CD14-positive monocyte (primary cell): ENCODE measurements at regions of chr18 and their contacts with region 1.

Region 1: DNA sequence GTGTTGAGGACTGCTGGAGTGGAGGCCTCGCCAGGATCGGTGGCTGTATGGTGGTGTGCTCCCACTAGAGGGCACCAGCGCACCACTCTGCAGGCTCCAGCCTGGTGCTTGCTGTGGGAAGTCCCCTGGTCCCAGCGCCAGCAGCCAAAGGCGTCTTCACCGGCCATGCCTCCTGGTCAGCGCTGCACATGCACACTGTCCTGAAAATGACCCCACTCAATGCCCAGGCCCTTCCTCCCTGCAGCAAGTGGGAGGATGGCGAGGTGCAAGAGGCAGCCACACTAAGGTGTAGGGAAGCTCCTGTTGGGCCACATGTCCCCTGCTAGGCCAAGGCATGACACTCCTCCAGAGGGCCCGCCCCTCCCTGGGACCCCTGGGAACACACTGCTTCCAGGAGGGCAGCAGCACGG is 136.5 kb downstream of the CTIF start:
- DNase-seq: peak; percentile 85 to 89 (median 89)
- H3K4me3 ChIP-seq: no peak overlapping the region
- H3K4me3 Mint-ChIP-seq: peak overlapping the region in 1 of 2 donors; percentile 35
- H3K27ac ChIP-seq: peak overlapping the region in 1 of 2 donors; percentile 33
- H3K27ac Mint-ChIP-seq: no peak overlapping the region
- H3K4me1 ChIP-seq: peaks cover 61 to 74% of the 10 kb centered on the region in 2 donors
- H3K4me1 Mint-ChIP-seq: peaks cover 76% of the 10 kb centered on the region
- H3K27me3 ChIP-seq: no peaks in the 10 kb centered on the region
- H3K27me3 Mint-ChIP-seq: peaks cover 0 to 4% (median 1%) of the 10 kb centered on the region in 3 donors
- CTCF ChIP-seq: peak; percentile 91

Region 2: DNA sequence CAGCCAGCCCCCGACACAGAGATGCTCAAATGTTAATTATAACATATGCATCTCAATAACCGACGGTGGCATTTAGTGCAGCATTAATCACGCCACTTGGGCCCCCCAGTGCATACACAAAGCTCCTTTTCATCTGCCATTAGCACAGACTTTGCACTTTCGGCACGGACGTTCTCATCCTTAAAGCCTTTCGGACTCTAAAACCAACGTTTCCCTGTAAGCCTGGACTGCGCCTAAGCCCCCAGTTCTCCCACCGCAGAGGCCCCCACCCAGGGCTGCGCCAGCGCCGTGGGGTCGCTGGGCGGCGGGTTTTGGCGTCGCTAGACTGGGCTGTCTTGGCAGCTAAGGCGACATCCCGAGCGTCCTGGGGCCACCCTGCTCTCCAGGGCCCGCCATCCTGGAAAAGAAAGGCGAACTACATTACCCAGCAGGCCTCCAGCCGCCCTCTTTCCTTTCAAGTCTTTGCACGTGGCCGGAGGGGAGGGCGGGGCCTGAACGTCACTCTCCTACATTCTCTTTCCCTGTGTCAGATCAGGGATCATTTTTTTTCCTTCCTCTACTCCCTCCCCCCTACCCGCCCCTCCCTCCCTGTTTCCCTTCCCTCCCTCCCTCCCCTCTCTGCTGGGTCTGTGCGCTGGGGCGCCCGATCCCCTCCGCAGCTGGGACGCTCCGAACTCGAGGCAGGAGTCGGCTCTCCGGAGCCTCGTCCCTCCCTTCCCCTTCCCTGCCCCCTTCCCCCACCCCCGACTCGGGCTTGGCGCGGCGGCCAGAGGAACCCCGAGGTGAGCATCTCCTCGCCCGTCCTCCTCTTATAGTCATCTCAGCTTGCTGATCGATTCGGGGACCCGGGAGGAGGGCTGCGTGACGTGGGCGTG is 136.6 kb before region 1 on chr18 and contains the start of gene CTIF:
- intact Hi-C with region 1: no loop called
- DNase-seq: peak; percentile 67 to 77 (median 72)
- H3K4me3 ChIP-seq: peak within 1 kb of the TSS; percentile 48 to 94 (median 84)
- H3K4me3 Mint-ChIP-seq: peak within 1 kb of the TSS; percentile 92 to 94
- H3K27ac ChIP-seq: peak within 1 kb of the TSS in 1 of 2 donors; percentile 20
- H3K27ac Mint-ChIP-seq: peak within 1 kb of the TSS in 6 of 7 donors; percentile 68 to 85 (median 82)
- H3K4me1 ChIP-seq: peaks cover 21 to 33% of the 10 kb centered on the region in 2 donors
- H3K4me1 Mint-ChIP-seq: peaks cover 13% of the 10 kb centered on the region
- H3K27me3 ChIP-seq: peaks cover 0 to 4% of the 10 kb centered on the region in 2 donors
- H3K27me3 Mint-ChIP-seq: peaks cover 5 to 16% (median 6%) of the 10 kb centered on the region in 3 donors
- CTCF ChIP-seq: no peak
- polyA plus RNA-seq, gene CTIF: 0.38 to 8.7 (median 1.2) TPM

Region 3: DNA sequence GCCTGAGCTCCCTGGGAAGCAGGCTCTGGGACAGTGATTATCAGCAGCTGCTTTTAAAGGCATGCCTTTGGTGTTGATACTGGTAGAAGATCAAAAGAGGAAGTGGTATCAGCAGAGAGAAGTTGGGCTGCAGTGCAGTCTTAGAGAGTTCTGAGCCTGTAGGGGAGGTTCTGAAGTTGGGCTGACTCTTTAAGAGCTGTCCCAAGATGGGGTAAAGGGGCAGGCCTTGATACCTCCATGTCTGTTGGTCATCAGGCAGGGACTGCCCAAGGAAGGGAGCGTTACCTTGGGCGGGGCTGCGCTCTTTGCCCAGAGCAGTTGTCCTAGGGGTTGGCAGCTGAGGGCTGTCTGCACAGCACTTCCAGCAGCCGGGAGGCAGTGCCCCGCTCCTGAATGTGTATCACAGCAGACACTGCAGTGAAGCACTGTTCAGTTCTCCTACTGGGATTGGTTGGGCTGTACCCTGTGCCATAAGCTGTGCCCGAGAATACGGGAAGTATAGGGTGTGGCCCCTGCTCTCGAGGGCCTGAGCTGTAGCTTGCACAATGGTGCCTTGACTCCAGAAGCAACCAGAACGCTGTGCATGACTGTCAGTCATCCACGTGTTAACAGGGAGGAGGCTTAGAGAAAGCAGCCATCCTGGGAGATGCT is 40.5 kb after region 1 on chr18:
- intact Hi-C with region 1: loop called in 1 of 2 experiments (anchors 1 kb)
- DNase-seq: peak; percentile 94 to 96 (median 94)
- H3K4me3 ChIP-seq: peak overlapping the region in 1 of 3 experiments; percentile 45
- H3K4me3 Mint-ChIP-seq: peak overlapping the region; percentile 50 to 75
- H3K27ac ChIP-seq: peak overlapping the region; percentile 96 to 98
- H3K27ac Mint-ChIP-seq: peak overlapping the region; percentile 98 to 99 (median 99)
- H3K4me1 ChIP-seq: peaks cover 35 to 36% of the 10 kb centered on the region in 2 donors
- H3K4me1 Mint-ChIP-seq: peaks cover 46% of the 10 kb centered on the region
- H3K27me3 ChIP-seq: no peaks in the 10 kb centered on the region
- H3K27me3 Mint-ChIP-seq: peaks cover 0 to 2% (median 0%) of the 10 kb centered on the region in 3 donors
- CTCF ChIP-seq: no peak

Region 4: GRCh38 chr18:48742706-48743475 is 67.5 kb after region 1 on chr18:
- intact Hi-C with region 1: loop called in 1 of 2 experiments (anchors 10 kb)
- DNase-seq: peak; percentile 81 to 85 (median 82)
- H3K4me3 ChIP-seq: peak overlapping the region in 1 of 3 experiments; percentile 48
- H3K4me3 Mint-ChIP-seq: peak overlapping the region; percentile 7 to 78
- H3K27ac ChIP-seq: peak overlapping the region; percentile 72 to 80
- H3K27ac Mint-ChIP-seq: peak overlapping the region; percentile 67 to 95 (median 90)
- H3K4me1 ChIP-seq: peaks cover 42 to 45% of the 10 kb centered on the region in 2 donors
- H3K4me1 Mint-ChIP-seq: peaks cover 47% of the 10 kb centered on the region
- H3K27me3 ChIP-seq: no peaks in the 10 kb centered on the region
- H3K27me3 Mint-ChIP-seq: peaks cover 0 to 3% (median 0%) of the 10 kb centered on the region in 3 donors
- CTCF ChIP-seq: no peak

Region 5: DNA sequence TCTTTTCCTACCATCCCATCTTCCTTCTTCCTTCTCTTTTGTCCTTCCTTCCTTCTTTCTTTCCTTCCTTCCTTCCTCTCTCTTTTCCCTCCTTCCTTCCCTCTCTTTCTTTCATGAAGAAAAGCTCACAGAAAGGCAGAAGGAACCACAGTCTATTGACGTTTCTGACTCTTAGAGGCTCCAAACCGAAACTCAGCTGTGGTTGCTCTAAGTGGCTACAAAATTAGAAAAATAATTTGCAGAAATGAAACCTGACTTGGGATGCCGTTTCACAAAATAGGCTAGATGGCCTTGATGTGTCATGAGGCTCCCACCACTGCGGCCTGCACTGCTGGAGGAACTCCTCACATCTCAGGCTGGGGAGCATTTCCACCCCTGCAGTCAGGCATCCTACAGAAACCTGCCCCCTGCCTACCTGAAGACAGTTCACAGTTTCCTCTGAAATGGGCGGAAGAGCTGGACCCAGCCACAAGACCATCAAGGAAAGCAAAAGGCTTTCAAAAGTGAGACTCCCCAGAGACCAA is 109.8 kb after region 1 on chr18:
- intact Hi-C with region 1: loop called in 1 of 2 experiments (anchors 5 kb)
- DNase-seq: peak; percentile 82 to 91 (median 88)
- H3K4me3 ChIP-seq: peak overlapping the region in 1 of 3 experiments; percentile 39
- H3K4me3 Mint-ChIP-seq: peak overlapping the region; percentile 25 to 78
- H3K27ac ChIP-seq: peak overlapping the region; percentile 81 to 93
- H3K27ac Mint-ChIP-seq: peak overlapping the region; percentile 90 to 97 (median 96)
- H3K4me1 ChIP-seq: peaks cover 75 to 84% of the 10 kb centered on the region in 2 donors
- H3K4me1 Mint-ChIP-seq: peaks cover 79% of the 10 kb centered on the region
- H3K27me3 ChIP-seq: no peaks in the 10 kb centered on the region
- H3K27me3 Mint-ChIP-seq: peaks cover 3 to 16% (median 13%) of the 10 kb centered on the region in 3 donors
- CTCF ChIP-seq: no peak

Region 6: DNA sequence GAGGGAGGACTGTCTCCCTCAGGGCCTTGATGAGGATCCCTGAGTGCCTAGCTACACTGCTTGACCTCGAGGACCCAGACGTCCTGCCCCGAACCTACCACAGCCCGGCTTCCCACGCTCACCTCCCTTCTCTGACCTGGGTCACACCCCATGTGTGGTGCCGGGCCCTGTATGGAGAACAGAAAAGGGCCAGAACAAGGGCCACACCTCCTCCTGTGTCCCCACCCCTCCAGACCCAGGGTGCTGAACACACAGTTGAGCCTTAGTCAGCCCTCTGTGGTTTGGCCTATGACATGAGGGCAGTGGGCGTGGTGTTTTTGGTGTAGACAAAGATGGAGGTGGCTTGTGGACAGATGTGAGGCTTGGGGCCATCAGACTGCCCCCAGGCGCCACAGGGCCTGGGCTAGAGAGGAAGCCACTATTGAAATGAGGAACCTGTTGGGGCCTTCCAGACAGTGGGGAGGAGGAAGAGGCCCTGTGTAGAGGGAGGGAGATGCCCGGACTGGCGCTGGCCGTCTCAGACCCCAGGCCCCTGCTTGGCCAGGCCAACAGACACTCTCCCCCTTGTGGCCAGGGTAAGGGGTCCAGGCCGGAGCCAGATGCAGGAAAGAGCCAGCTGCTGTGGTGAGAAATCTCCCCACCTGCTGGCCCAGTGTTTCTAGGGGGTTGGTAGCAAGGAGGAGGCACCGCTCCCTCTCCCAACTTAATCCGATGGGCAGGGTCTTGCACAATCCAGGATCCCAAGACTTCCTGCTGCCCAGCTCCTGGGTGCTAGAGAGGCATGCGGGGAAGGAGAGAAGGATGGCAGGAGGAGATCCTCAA is 221.5 kb after region 1 on chr18:
- intact Hi-C with region 1: loop called in 1 of 2 experiments (anchors 10 kb)
- DNase-seq: peak; percentile 99 to 100 (median 100)
- H3K4me3 ChIP-seq: peak overlapping the region in 1 of 3 experiments; percentile 50
- H3K4me3 Mint-ChIP-seq: peak overlapping the region; percentile 56 to 74
- H3K27ac ChIP-seq: peak overlapping the region; percentile 90 to 93
- H3K27ac Mint-ChIP-seq: peak overlapping the region; percentile 93 to 99 (median 97)
- H3K4me1 ChIP-seq: peaks cover 43 to 47% of the 10 kb centered on the region in 2 donors
- H3K4me1 Mint-ChIP-seq: peaks cover 48% of the 10 kb centered on the region
- H3K27me3 ChIP-seq: no peaks in the 10 kb centered on the region
- H3K27me3 Mint-ChIP-seq: no peaks in the 10 kb centered on the region
- CTCF ChIP-seq: peak; percentile 55

Region 7: DNA sequence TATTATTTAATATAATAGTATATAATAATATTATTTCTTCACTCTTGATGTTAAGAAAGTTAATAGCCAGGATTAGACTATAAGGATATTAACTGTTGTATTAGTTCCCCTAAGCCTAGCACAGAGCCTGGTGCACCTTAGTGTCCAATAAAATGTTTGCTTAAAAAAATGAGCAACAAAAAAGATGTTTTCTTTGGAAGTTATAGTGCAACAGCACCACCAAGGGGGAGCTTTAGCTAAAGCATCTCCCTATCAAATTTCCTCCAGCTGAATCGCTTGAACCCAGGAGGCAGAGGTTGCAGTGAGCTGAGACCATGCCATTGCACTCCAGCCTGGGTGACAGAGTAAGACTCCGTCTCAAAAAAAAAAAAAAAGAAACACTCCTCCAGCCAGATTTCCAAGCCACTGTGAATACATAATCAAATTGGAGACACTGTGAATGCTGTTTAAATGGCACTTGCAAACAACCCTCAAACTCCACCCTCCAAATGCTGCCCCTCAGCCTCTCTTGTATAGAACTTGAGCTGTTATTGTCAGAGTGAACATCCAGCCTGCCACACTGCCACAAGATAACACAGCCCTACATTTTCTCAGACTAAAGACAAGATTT is 563.2 kb after region 1 on chr18:
- intact Hi-C with region 1: loop called (anchors 5 to 10 kb)
- DNase-seq: peak in 2 of 3 donors; percentile 16 to 23
- H3K4me3 ChIP-seq: no peak overlapping the region
- H3K4me3 Mint-ChIP-seq: no peak overlapping the region
- H3K27ac ChIP-seq: no peak overlapping the region
- H3K27ac Mint-ChIP-seq: no peak overlapping the region
- H3K4me1 ChIP-seq: no peaks in the 10 kb centered on the region
- H3K4me1 Mint-ChIP-seq: no peaks in the 10 kb centered on the region
- H3K27me3 ChIP-seq: no peaks in the 10 kb centered on the region
- H3K27me3 Mint-ChIP-seq: no peaks in the 10 kb centered on the region
- CTCF ChIP-seq: peak; percentile 54

Region 8: GRCh38 chr18:49858309-49859020 is 1183.1 kb after region 1 on chr18:
- intact Hi-C with region 1: loop called in 1 of 2 experiments (anchors 5 kb)
- DNase-seq: peak; percentile 25 to 46 (median 38)
- H3K4me3 ChIP-seq: no peak overlapping the region
- H3K4me3 Mint-ChIP-seq: no peak overlapping the region
- H3K27ac ChIP-seq: no peak overlapping the region
- H3K27ac Mint-ChIP-seq: no peak overlapping the region
- H3K4me1 ChIP-seq: no peaks in the 10 kb centered on the region
- H3K4me1 Mint-ChIP-seq: no peaks in the 10 kb centered on the region
- H3K27me3 ChIP-seq: no peaks in the 10 kb centered on the region
- H3K27me3 Mint-ChIP-seq: peaks cover 0 to 3% (median 0%) of the 10 kb centered on the region in 3 donors
- CTCF ChIP-seq: peak; percentile 92